AG04450 (cell line): ENCODE measurements at regions of chr6 and their contacts with region 1.

Region 1: GRCh38 chr6:16301511-16301910 is 63.1 kb downstream of the GMPR start:
- DNase-seq: no peak
- H3K4me3 ChIP-seq: no peak overlapping the region
- H3K27ac ChIP-seq: no peak overlapping the region
- H3K27me3 ChIP-seq: no peaks in the 10 kb centered on the region
- CTCF ChIP-seq: no peak

Region 2: GRCh38 chr6:16286148-16286522 is 15.4 kb before region 1 on chr6:
- CTCF ChIA-PET with region 1: interaction called, 34 read pairs
- POLR2A ChIA-PET with region 1: no interaction called
- DNase-seq: no peak
- H3K4me3 ChIP-seq: no peak overlapping the region
- H3K27ac ChIP-seq: no peak overlapping the region
- H3K27me3 ChIP-seq: no peaks in the 10 kb centered on the region
- CTCF ChIP-seq: peak; percentile 88

Region 3: DNA sequence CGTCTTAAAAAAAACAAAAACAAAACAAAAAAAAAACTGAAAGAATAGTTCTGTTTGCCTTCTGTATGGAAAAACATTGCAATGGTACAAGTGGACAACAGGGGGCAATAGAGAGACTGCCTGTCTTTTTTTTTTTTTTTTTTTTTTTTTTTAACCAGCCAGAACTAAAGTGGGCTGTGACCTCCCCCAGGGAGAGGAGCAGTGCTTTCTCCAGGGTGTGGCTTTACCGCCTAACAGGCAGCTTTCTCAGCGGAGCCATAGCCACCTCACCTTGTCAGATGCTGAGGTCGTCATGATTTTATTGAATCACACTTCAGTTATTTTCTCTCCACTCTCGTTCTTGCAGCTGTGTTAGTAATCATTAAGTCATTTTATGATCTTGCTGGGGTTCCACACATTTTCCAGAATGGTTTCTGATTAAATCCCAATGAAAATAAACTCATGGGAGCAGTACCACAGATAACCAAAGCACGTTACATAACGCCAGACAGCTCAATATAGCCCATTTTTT is 15.3 kb after region 1 on chr6:
- CTCF ChIA-PET with region 1: interaction called, 10 read pairs
- POLR2A ChIA-PET with region 1: no interaction called
- DNase-seq: no peak
- H3K4me3 ChIP-seq: no peak overlapping the region
- H3K27ac ChIP-seq: no peak overlapping the region
- H3K27me3 ChIP-seq: no peaks in the 10 kb centered on the region
- CTCF ChIP-seq: peak; percentile 89

Region 4: GRCh38 chr6:16524380-16524707 is 222.8 kb after region 1 on chr6:
- CTCF ChIA-PET with region 1: no interaction called
- POLR2A ChIA-PET with region 1: no interaction called
- DNase-seq: no peak
- H3K4me3 ChIP-seq: no peak overlapping the region
- H3K27ac ChIP-seq: no peak overlapping the region
- H3K27me3 ChIP-seq: no peaks in the 10 kb centered on the region
- CTCF ChIP-seq: no peak